SK-N-SH (cell line): ENCODE measurements at regions of chr18 and their contacts with region 1.

Region 1: DNA sequence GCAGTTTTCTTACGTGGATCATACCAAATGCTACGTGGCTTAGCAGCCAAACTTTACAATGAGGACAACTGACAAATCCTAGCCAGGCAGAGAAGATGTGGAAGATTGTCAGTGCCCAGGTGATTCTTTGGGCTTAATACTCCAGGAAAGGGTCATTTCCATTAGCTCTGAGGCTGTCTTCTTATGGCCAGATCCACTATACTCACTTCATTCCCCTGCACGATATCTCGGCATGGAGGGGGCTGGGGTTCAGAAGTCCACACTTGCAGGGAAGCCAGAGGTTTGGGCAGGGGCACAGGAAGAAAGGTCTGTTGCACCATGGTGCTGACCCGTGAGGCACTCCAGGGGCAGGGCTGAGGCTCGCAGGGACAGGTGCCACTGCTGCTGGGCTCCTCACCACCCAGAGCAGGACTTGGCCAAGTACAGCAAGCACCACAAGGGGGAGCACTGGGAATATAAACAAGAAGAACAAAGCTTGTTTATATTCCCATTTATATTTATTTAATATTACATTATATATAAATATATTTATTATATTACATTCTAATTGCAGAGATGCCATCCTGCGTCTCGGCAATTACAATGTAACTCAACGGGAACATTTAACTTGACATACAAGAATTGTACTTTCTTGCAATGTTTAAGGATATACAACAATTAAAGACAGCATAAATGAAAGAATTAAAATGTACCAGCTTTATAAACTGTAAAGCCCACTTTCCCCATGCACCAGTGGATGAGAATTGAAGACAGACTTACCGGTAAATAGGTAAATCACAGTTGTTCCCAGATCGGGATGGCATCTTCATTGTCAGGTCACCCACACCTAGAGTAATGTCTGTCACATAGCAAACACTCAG is 27.2 kb downstream of the CLUL1 start:
- DNase-seq: peak; percentile 59
- H3K4me3 ChIP-seq: no peak overlapping the region; a peak in 1 of 4 replicates
- H3K27ac ChIP-seq: no peak overlapping the region
- H3K4me1 ChIP-seq: no peaks in the 10 kb centered on the region; a peak in 1 of 4 replicates
- H3K27me3 ChIP-seq: peaks cover 25% of the 10 kb centered on the region; the same call in 1 of the 2 replicates
- CTCF ChIP-seq: peak; percentile 67
- EP300 ChIP-seq: no peak
- RAD21 ChIP-seq: peak; percentile 72

Region 2: GRCh38 chr18:543447-544078 is 80.4 kb before region 1 on chr18:
- CTCF ChIA-PET with region 1: no interaction called
- POLR2A ChIA-PET with region 1: no interaction called
- DNase-seq: no peak
- H3K4me3 ChIP-seq: no peak overlapping the region
- H3K27ac ChIP-seq: no peak overlapping the region
- H3K4me1 ChIP-seq: no peaks in the 10 kb centered on the region
- H3K27me3 ChIP-seq: peaks cover 21% of the 10 kb centered on the region; the same call in 1 of the 2 replicates
- CTCF ChIP-seq: no peak
- EP300 ChIP-seq: no peak
- RAD21 ChIP-seq: no peak

Region 3: GRCh38 chr18:604771-605170 is 19.2 kb before region 1 on chr18:
- CTCF ChIA-PET with region 1: interaction called, 15 read pairs
- POLR2A ChIA-PET with region 1: no interaction called
- DNase-seq: no peak
- H3K4me3 ChIP-seq: no peak overlapping the region
- H3K27ac ChIP-seq: no peak overlapping the region
- H3K4me1 ChIP-seq: no peaks in the 10 kb centered on the region; a peak in 2 of 4 replicates
- H3K27me3 ChIP-seq: peaks cover 8% of the 10 kb centered on the region; the same call in 1 of the 2 replicates
- CTCF ChIP-seq: no peak
- EP300 ChIP-seq: no peak
- RAD21 ChIP-seq: no peak

Region 4: DNA sequence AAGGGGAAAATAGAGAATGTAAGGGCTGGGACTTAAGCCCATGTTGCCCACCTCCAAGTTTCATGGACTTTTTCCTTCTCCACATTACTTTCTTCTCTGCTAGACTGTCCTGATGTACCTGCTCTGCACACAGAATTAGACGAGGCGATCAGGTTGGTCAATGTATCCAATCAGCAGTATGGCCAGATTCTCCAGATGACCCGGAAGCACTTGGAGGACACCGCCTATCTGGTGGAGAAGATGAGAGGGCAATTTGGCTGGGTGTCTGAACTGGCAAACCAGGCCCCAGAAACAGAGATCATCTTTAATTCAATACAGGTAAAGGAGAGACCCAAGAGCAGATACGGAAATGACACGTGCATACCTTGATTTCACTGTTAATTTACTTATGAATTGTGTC is 17.2 kb after region 1 on chr18:
- CTCF ChIA-PET with region 1: interaction called, 12 read pairs
- POLR2A ChIA-PET with region 1: no interaction called
- DNase-seq: no peak
- H3K4me3 ChIP-seq: no peak overlapping the region
- H3K27ac ChIP-seq: no peak overlapping the region
- H3K4me1 ChIP-seq: no peaks in the 10 kb centered on the region
- H3K27me3 ChIP-seq: no peaks in the 10 kb centered on the region
- CTCF ChIP-seq: no peak
- EP300 ChIP-seq: no peak
- RAD21 ChIP-seq: no peak

Region 5: DNA sequence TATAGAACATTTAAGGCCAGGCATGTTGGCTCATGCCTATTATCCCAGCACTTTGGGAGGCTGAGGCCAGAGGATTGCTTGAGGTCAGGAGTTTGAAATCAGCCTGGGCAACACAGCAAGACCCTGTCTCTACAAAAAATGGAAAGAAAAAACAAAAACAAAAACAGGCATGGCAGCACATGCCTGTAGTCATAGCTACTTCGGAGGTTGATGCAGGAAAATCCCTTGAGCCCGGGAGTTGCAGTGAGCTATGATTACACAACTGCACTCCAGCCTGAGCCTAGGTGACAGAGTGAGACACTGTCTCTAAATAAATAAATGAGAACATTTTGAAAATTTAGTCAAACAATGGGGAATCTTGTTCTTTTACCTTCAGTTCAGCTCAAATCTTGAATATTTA is 200.2 kb after region 1 on chr18:
- CTCF ChIA-PET with region 1: interaction called, 149 read pairs
- POLR2A ChIA-PET with region 1: no interaction called
- DNase-seq: no peak
- H3K4me3 ChIP-seq: no peak overlapping the region
- H3K27ac ChIP-seq: no peak overlapping the region
- H3K4me1 ChIP-seq: no peaks in the 10 kb centered on the region
- H3K27me3 ChIP-seq: no peaks in the 10 kb centered on the region
- CTCF ChIP-seq: no peak
- EP300 ChIP-seq: no peak
- RAD21 ChIP-seq: no peak

Region 6: DNA sequence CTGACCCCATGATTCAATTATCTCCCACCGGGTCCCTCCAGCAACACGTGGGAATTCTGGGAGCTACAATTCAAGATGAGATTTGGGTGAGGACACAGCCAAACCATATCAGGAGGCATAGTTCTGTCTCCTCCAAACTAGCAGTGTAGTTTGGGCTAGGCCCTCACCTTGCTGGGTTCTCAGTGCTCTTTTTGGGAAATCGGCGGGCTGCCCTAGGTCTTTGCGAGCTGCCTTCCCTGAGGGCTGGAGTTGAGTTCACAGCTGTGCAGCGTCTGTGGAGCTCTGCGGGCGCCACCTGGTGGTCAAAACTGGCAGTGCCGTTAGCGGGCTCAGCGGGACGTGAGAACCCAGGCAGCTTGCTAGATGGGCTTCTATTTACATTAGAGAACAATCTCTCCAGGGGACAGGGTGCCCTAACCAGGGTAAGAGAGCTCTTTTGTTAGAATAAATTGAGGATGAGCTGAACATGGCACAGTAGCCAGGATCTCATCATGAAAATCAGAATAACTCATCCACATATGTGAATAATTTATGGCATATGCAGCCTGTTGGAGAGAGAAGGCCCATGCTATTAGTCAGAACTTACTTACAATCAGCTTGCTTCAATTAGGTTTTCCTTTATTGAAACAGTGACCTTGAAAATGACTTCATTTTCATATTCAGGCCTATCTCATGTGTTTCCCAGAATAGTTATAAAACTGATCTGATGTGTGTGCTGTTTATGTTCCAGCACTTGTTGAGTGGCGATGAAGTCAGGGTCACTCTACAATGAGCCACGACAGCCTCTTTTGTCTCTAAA is 215.4 kb after region 1 on chr18:
- CTCF ChIA-PET with region 1: interaction called, 149 read pairs
- POLR2A ChIA-PET with region 1: no interaction called
- DNase-seq: peak; percentile 83
- H3K4me3 ChIP-seq: peak overlapping the region in 1 of 2 experiments; percentile 18; a peak in 2 of 4 replicates
- H3K27ac ChIP-seq: peak overlapping the region; percentile 3 to 60; a peak in 2 of 4 replicates
- H3K4me1 ChIP-seq: no peaks in the 10 kb centered on the region; a peak in 2 of 4 replicates
- H3K27me3 ChIP-seq: no peaks in the 10 kb centered on the region; the same call in 1 of the 2 replicates
- CTCF ChIP-seq: peak; percentile 99
- EP300 ChIP-seq: no peak
- RAD21 ChIP-seq: peak; percentile 69